Activated CD4-positive, alpha-beta T cell treated with anti-CD3 and anti-CD28 coated beads, Interleukin-2, amount 10 ng/mL, durations not matched to agents 24 days and 14 days (primary cell): ENCODE measurements at regions of chrX and their contacts with region 1.

Region 1: GRCh38 chrX:9464435-9465371 is at the start of gene TBL1X:
- DNase-seq: peak; percentile 87
- H3K4me3 Mint-ChIP-seq: peak within 1 kb of the TSS; percentile 73
- H3K27ac Mint-ChIP-seq: peak within 1 kb of the TSS; percentile 84
- H3K4me1 Mint-ChIP-seq: peaks cover 33% of the 10 kb centered on the region
- H3K27me3 Mint-ChIP-seq: peaks cover 5% of the 10 kb centered on the region
- total RNA-seq, gene TBL1X: 20.0 and 25.5 TPM in 2 replicates

Region 2: GRCh38 chrX:9538544-9539045 is 73.9 kb after region 1 on chrX:
- intact Hi-C with region 1: no loop called
- DNase-seq: no peak
- H3K4me3 Mint-ChIP-seq: no peak overlapping the region
- H3K27ac Mint-ChIP-seq: no peak overlapping the region
- H3K4me1 Mint-ChIP-seq: peaks cover 9% of the 10 kb centered on the region
- H3K27me3 Mint-ChIP-seq: no peaks in the 10 kb centered on the region

Region 3: DNA sequence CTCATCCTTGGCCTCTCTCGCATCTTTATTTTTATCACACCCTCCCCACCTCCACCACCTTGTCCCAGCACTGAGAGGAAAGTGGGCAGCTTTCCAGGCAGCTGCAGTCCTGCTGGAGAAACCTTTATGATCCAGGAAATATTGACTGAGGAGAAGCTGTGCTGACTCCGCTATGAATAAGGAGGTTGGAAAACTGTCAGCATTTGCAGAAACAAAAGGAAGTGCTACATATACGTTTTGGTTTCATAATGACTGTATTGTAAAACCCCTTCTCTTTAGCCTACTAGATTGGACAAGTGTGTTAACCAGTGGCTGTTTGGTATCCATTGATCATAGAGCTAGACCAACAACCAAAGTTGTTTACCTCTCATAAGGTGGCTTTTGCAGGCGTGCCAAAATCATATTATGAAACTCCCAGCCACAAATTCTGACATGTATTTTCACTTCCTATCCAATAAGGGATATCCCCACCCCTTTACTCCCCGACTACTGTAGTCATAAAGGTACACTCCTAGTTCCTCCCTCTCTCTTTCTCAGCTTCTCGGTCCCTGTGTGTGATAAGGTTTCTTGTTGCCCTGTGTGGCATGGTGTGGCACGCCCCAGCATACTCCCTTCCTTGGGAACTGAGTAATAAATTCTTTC is 212.5 kb after region 1 on chrX:
- intact Hi-C with region 1: loop called (anchors 1 kb)
- DNase-seq: peak; percentile 82
- H3K4me3 Mint-ChIP-seq: peak overlapping the region; percentile 58
- H3K27ac Mint-ChIP-seq: peak overlapping the region; percentile 79
- H3K4me1 Mint-ChIP-seq: peaks cover 20% of the 10 kb centered on the region
- H3K27me3 Mint-ChIP-seq: no peaks in the 10 kb centered on the region

Region 4: DNA sequence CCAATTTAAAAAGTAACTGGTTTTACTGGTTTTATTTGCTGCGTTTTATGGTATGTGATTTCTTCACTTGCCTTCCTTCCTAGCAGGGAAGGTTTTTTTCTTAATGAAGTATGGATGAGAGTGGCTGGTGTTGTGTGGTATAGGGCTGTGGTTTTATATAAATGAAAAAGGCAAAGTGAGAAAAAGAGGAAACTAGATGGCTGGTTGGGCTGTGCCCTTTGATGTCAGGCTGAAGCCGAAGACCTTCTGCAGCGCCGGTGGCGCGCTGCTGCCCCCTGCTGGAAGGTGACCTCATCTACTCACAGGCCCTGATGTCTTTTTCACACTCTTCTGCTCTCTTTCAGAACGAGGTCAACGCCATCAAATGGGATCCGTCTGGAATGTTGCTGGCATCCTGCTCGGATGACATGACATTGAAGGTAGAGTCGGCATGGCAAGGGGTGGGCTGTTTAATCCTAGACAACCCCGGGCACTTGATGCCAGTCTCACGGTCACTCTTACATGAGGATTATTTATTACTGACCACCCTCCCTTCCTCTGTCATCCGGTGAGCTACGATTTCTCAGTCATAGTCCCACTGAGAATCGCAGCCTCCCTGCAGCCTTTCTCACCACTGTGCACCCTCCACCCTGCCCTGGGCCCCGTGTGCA is 244.3 kb after region 1 on chrX:
- intact Hi-C with region 1: loop called (anchors 10 kb)
- DNase-seq: peak; percentile 92
- H3K4me3 Mint-ChIP-seq: no peak overlapping the region
- H3K27ac Mint-ChIP-seq: no peak overlapping the region
- H3K4me1 Mint-ChIP-seq: peaks cover 8% of the 10 kb centered on the region
- H3K27me3 Mint-ChIP-seq: no peaks in the 10 kb centered on the region

Region 5: GRCh38 chrX:10001496-10001895 is 536.8 kb after region 1 on chrX:
- intact Hi-C with region 1: loop called (anchors 5 kb)
- DNase-seq: no peak
- H3K4me3 Mint-ChIP-seq: no peak overlapping the region
- H3K27ac Mint-ChIP-seq: no peak overlapping the region
- H3K4me1 Mint-ChIP-seq: peaks cover 20% of the 10 kb centered on the region
- H3K27me3 Mint-ChIP-seq: no peaks in the 10 kb centered on the region